ENCODE measurements at regions of chr9 and their contacts with region 1.

Region 1: DNA sequence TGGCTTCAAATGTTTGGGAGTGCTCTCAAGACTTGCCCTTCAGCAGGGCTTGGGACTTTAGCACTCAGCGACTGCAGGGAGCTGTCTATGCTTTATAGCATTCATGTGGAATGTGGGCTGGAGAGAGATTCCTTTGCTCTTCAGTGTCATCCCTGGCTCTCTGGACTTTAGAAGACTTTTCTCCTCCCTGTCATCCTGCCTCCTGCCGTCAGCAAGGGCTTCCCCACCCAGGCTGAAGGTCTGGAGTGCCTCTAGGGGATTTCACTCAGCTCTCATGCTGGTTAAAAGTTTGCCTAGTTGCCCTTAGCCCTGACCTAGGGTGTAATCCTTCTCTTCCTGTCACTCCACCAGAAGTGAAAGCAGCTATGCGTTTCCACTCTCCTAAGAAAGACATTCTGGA is 210.9 kb downstream of the FRMD3 start:
- DNase-seq: no peak
- ATAC-seq: no peak
- H3K4me3 ChIP-seq: no peak overlapping the region
- H3K4me3 Mint-ChIP-seq: no peak overlapping the region
- H3K27ac ChIP-seq: no peak overlapping the region
- H3K27ac Mint-ChIP-seq: no peak overlapping the region
- H3K4me1 ChIP-seq: no peaks in the 10 kb centered on the region
- H3K4me1 Mint-ChIP-seq: no peaks in the 10 kb centered on the region
- H3K27me3 ChIP-seq: no peaks in the 10 kb centered on the region
- H3K27me3 Mint-ChIP-seq: no peaks in the 10 kb centered on the region

Region 2: DNA sequence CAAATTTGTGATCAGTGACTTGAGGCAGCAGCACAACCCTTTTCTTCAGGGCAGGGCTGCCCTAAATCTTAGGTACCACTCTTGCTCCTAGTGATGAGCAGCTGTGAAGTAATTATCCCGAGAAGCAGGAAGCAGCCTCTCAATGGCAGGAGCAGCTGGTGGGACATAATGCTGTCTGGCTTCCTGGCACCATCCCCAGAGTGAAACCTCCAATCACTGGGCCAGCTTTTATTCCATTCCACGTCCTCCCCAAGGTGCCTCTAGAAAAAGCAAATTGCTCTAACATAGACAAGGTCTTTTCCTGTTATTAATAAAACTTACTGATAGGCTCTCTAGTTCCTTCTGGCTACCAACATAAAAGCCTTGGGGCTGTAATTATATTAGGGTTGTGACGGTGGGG is 56.9 kb after region 1 on chr9:
- CTCF ChIA-PET with region 1: no interaction called
- POLR2A ChIA-PET with region 1: no interaction called
- intact Hi-C with region 1: loop called in 1 of 2 experiments (anchors 10 kb)
- DNase-seq: no peak
- ATAC-seq: no peak
- H3K4me3 ChIP-seq: no peak overlapping the region
- H3K4me3 Mint-ChIP-seq: no peak overlapping the region
- H3K27ac ChIP-seq: no peak overlapping the region
- H3K27ac Mint-ChIP-seq: no peak overlapping the region
- H3K4me1 ChIP-seq: no peaks in the 10 kb centered on the region
- H3K4me1 Mint-ChIP-seq: peaks cover 0 to 1% (median 0%) of the 10 kb centered on the region in 7 donors
- H3K27me3 ChIP-seq: no peaks in the 10 kb centered on the region
- H3K27me3 Mint-ChIP-seq: no peaks in the 10 kb centered on the region

Measured in naive thymus-derived CD4-positive, alpha-beta T cell (primary cell).